OCI-LY7 (cell line): ENCODE measurements at regions of chr7 and their contacts with region 1.

Region 1: DNA sequence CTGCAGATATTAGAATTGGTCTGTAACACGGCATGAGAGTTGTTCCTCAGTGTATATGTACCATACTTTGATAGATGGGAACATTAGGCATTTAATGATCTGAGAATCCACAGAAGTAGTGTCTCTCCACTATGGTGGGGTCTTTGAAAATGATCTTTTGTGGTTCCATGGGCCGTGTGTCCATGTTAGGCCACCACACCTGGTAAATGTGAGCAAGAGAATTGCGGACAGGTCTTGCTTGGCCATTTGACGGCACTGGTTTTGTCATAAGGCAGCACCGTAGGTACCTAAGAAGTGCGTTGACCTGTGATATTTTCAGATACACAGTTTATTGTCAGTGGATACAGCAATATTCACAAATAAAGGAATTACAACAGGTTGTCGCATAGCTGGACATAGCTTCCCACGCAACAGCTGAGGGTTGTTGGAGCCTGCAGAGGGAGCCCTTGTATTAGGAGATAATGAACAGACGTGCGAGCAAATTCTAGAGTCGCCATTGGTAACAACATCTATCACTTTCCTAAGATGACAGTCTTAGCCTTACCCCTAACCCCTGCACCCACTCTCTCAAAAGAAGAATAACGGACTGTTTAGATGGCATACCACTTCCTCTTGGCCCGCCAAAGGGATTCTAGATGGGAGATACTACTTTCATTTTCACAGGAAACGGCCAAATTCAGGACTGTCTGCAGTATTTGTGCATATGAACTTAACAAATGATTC is 111.4 kb downstream of the COL28A1 start:
- DNase-seq: peak; percentile 65
- H3K4me3 ChIP-seq: peak overlapping the region; percentile 63
- H3K27ac ChIP-seq: no peak overlapping the region
- H3K4me1 ChIP-seq: no peaks in the 10 kb centered on the region
- CTCF ChIP-seq: peak; percentile 82

Region 2: GRCh38 chr7:7542251-7542835 is 118.0 kb after region 1 on chr7:
- CTCF ChIA-PET with region 1: no interaction called
- POLR2A ChIA-PET with region 1: no interaction called
- intact Hi-C with region 1: loop called (anchors 2 kb)
- DNase-seq: no peak
- H3K4me3 ChIP-seq: no peak overlapping the region
- H3K27ac ChIP-seq: no peak overlapping the region
- H3K4me1 ChIP-seq: no peaks in the 10 kb centered on the region
- CTCF ChIP-seq: no peak